ENCODE measurements at regions of chr22 and their contacts with region 1.

Region 1: GRCh38 chr22:40746428-40747220 is 67.3 kb downstream of the MCHR1 start:
- DNase-seq: no peak

Region 2: DNA sequence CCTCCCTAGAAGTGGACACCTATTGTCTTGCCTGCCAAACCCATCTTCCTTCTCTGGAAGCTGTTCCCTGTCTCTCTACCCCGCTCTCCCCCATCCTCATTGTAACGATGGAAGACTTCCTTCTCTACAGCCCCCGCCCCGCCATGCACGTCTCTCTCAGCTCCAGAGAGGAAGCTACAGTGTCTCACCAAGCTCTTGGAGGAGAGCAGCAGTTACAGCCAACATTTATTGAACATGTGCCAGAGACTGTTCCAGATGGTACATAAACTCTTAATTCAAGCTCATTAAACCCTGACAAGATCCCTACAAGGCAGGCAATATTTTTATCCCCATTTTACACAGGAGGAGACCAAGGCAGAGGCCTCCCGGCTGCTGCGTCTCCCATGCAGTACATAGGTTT is 52.2 kb before region 1 on chr22:
- intact Hi-C with region 1: loop called in 1 of 2 experiments (anchors 5 kb)
- DNase-seq: no peak

Region 3: GRCh38 chr22:41022470-41023298 is 276.1 kb after region 1 on chr22:
- intact Hi-C with region 1: no loop called
- DNase-seq: peak; percentile 97